GM23248 (cell line): ENCODE measurements at regions of chr5 and their contacts with region 1.

Region 1: GRCh38 chr5:174951146-174951780 is 226.9 kb downstream of the MSX2 start:
- DNase-seq: peak; percentile 82
- H3K4me3 ChIP-seq: no peak overlapping the region
- H3K27ac ChIP-seq: no peak overlapping the region
- H3K4me1 ChIP-seq: no peaks in the 10 kb centered on the region
- H3K27me3 ChIP-seq: 0 out of 2 replicates have a peak, but pooled peaks cover 6% of the 10 kb centered on the region

Region 2: GRCh38 chr5:175444060-175444904 is 493.0 kb after region 1 on chr5 and contains the start of gene DRD1:
- in situ Hi-C with region 1: loop called (anchors 10 kb)
- DNase-seq: peak; percentile 59
- H3K4me3 ChIP-seq: peak within 1 kb of the TSS; percentile 27
- H3K27ac ChIP-seq: no peak within 1 kb of the TSS
- H3K4me1 ChIP-seq: no peaks in the 10 kb centered on the region
- H3K27me3 ChIP-seq: peaks cover 43% of the 10 kb centered on the region
- total RNA-seq, gene DRD1: not detected in 2 replicates